SK-N-SH (cell line): ENCODE measurements at regions of chr4 and their contacts with region 1.

Region 1: GRCh38 chr4:139295206-139295941 is 5.9 kb upstream of the NAA15 start:
- DNase-seq: peak; percentile 91
- H3K4me3 ChIP-seq: peak overlapping the region; percentile 71 to 89
- H3K27ac ChIP-seq: peak overlapping the region; percentile 64 to 86
- H3K4me1 ChIP-seq: peaks cover 16 to 20% of the 10 kb centered on the region in 2 experiments; a peak in 3 of 4 replicates
- H3K27me3 ChIP-seq: no peaks in the 10 kb centered on the region
- CTCF ChIP-seq: peak; percentile 87
- EP300 ChIP-seq: peak in 1 of 2 experiments; percentile 24; a peak in 1 of 4 replicates
- RAD21 ChIP-seq: peak; percentile 87

Region 2: DNA sequence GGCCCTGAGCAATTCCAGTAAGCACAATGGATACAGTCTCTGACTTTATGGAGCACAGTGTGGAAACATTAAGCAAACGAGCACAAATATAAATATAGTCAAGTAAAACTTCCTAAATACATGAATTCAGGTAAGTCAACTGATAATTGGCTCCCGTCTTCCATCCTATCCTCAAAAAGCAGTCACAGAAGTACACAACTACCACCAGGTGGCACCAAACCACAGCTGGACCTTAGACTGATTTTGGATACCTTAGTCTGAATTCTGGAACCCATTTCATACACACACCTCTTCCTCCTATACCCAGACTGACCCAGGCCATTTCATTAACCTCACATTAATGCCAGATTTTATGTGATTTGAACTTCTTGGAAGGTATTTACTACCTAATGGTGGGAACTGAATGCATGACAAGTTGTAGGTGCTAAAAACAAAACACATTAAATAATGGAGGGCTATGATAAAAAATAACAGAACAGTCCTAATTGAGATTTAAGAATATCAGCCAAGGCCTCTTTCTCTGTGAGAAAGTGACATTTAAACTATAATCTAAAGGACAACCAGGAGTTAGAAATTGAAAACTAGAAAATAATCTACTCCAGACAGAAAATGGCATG is 195.9 kb before region 1 on chr4:
- CTCF ChIA-PET with region 1: interaction called, 23 read pairs
- POLR2A ChIA-PET with region 1: no interaction called
- DNase-seq: peak; percentile 76
- H3K4me3 ChIP-seq: no peak overlapping the region; a peak in 1 of 4 replicates
- H3K27ac ChIP-seq: no peak overlapping the region
- H3K4me1 ChIP-seq: peaks cover 0 to 2% of the 10 kb centered on the region in 2 experiments; a peak in 1 of 4 replicates
- H3K27me3 ChIP-seq: no peaks in the 10 kb centered on the region
- CTCF ChIP-seq: peak; percentile 89
- EP300 ChIP-seq: no peak
- RAD21 ChIP-seq: peak; percentile 93

Region 3: DNA sequence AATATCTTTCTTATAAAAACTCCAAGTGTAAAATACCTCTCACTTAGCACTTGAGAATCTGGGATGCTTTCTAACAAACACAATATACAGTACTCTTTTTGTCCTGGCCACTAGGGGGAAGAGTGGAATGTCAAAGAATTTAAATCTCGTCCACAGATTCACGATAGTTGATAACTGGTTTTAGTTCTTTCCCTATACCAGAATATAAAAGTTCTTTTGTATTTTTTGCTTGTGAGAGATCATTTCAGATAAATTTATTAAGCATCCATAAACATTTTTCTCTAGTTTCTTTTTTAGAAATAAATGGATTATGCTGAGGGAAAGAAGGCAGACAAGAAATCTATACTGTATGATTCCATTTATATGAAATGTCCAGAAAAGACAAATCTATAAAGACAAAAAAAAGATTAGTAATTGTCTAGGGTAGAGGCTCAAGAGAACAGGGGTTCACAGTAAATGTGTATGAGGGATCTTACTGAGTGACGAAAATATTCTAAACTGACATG is 65.8 kb before region 1 on chr4:
- CTCF ChIA-PET with region 1: interaction called, 38 read pairs
- POLR2A ChIA-PET with region 1: interaction called, 3 read pairs
- DNase-seq: peak; percentile 59
- H3K4me3 ChIP-seq: no peak overlapping the region
- H3K27ac ChIP-seq: no peak overlapping the region
- H3K4me1 ChIP-seq: no peaks in the 10 kb centered on the region; a peak in 1 of 4 replicates
- H3K27me3 ChIP-seq: no peaks in the 10 kb centered on the region
- CTCF ChIP-seq: peak; percentile 80
- EP300 ChIP-seq: no peak
- RAD21 ChIP-seq: peak; percentile 82

Region 4: GRCh38 chr4:139266583-139267257 is 28.7 kb before region 1 on chr4:
- CTCF ChIA-PET with region 1: interaction called, 11 read pairs
- POLR2A ChIA-PET with region 1: no interaction called
- DNase-seq: peak; percentile 72
- H3K4me3 ChIP-seq: peak overlapping the region; percentile 24 to 59; a peak in 3 of 4 replicates
- H3K27ac ChIP-seq: peak overlapping the region; percentile 79 to 84
- H3K4me1 ChIP-seq: peaks cover 8 to 20% of the 10 kb centered on the region in 2 experiments
- H3K27me3 ChIP-seq: no peaks in the 10 kb centered on the region
- CTCF ChIP-seq: no peak
- EP300 ChIP-seq: peak; percentile 19 to 58; a peak in 1 of 4 replicates
- RAD21 ChIP-seq: no peak